ENCODE measurements at regions of chr12 and their contacts with region 1.

Region 1: GRCh38 chr12:21438643-21439042 is 1.2 kb downstream of the PYROXD1 start:
- DNase-seq: no peak
- H3K4me3 Mint-ChIP-seq: peak overlapping the region; percentile 90
- H3K27ac Mint-ChIP-seq: peak overlapping the region; percentile 95
- H3K4me1 Mint-ChIP-seq: peaks cover 38% of the 10 kb centered on the region
- H3K27me3 Mint-ChIP-seq: no peaks in the 10 kb centered on the region

Region 2: DNA sequence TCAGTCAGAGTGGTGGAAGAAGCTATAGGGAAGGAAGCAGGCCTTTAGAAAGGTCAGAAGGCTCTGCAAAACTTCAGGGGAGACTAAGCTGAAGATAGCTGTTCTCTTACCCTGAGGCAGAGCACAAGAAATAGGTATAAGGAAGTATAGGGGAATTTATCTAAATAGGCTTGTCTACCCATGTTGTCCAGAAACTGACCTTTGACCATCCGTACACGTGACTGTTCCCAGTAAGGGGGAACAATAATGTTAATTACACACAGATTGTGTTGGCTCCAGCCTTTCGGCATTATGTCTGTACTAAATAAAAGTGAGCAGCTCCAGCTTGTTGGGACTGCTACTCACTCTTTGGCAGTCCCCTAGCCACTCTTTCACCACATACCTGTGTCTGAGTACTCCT is 248.6 kb before region 1 on chr12:
- CTCF ChIA-PET with region 1: no interaction called
- intact Hi-C with region 1: no loop called
- DNase-seq: no peak
- H3K4me3 Mint-ChIP-seq: no peak overlapping the region
- H3K27ac Mint-ChIP-seq: no peak overlapping the region
- H3K4me1 Mint-ChIP-seq: no peaks in the 10 kb centered on the region
- H3K27me3 Mint-ChIP-seq: no peaks in the 10 kb centered on the region

Region 3: GRCh38 chr12:21248679-21249078 is 190.0 kb before region 1 on chr12:
- CTCF ChIA-PET with region 1: no interaction called
- intact Hi-C with region 1: loop called (anchors 5 kb)
- DNase-seq: no peak
- H3K4me3 Mint-ChIP-seq: no peak overlapping the region
- H3K27ac Mint-ChIP-seq: no peak overlapping the region
- H3K4me1 Mint-ChIP-seq: no peaks in the 10 kb centered on the region
- H3K27me3 Mint-ChIP-seq: no peaks in the 10 kb centered on the region

Region 4: GRCh38 chr12:21308785-21309184 is 129.9 kb before region 1 on chr12:
- CTCF ChIA-PET with region 1: no interaction called
- intact Hi-C with region 1: no loop called
- DNase-seq: no peak
- H3K4me3 Mint-ChIP-seq: no peak overlapping the region
- H3K27ac Mint-ChIP-seq: no peak overlapping the region
- H3K4me1 Mint-ChIP-seq: no peaks in the 10 kb centered on the region
- H3K27me3 Mint-ChIP-seq: peaks cover 2% of the 10 kb centered on the region

Region 5: DNA sequence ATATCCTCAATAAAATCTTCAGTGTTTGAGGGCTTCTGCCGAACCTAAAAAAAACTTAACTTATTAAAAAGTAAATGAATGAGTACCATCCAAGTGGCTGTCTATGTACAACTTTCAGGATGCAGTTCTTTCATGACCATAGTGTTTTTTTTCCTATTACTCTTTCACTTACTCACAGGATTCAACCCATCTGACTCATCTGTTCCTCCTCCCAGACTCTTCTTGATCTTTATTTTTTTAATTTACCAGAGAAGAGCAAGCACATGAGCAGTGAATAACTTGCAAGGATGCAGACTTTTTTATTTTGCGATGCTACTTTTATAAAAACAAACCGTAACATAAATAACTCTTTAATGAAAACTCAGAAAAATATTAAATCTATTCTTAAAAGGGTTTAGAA is 38.3 kb after region 1 on chr12:
- CTCF ChIA-PET with region 1: interaction called, 5 read pairs
- intact Hi-C with region 1: loop called (anchors 2 kb)
- DNase-seq: no peak
- H3K4me3 Mint-ChIP-seq: no peak overlapping the region
- H3K27ac Mint-ChIP-seq: peak overlapping the region; percentile 50
- H3K4me1 Mint-ChIP-seq: peaks cover 16% of the 10 kb centered on the region
- H3K27me3 Mint-ChIP-seq: no peaks in the 10 kb centered on the region

Region 6: GRCh38 chr12:21613931-21614330 is 175.3 kb after region 1 on chr12:
- CTCF ChIA-PET with region 1: no interaction called
- intact Hi-C with region 1: loop called (anchors 2 kb)
- DNase-seq: no peak
- H3K4me3 Mint-ChIP-seq: no peak overlapping the region
- H3K27ac Mint-ChIP-seq: peak overlapping the region; percentile 85
- H3K4me1 Mint-ChIP-seq: peaks cover 49% of the 10 kb centered on the region
- H3K27me3 Mint-ChIP-seq: no peaks in the 10 kb centered on the region

Region 7: GRCh38 chr12:21657326-21658077 is 218.9 kb after region 1 on chr12 and contains the start of gene LDHB:
- CTCF ChIA-PET with region 1: interaction called, 3 read pairs
- intact Hi-C with region 1: loop called (anchors 1 kb)
- DNase-seq: peak; percentile 98
- H3K4me3 Mint-ChIP-seq: peak within 1 kb of the TSS; percentile 98
- H3K27ac Mint-ChIP-seq: peak within 1 kb of the TSS; percentile 98
- H3K4me1 Mint-ChIP-seq: peaks cover 59% of the 10 kb centered on the region
- H3K27me3 Mint-ChIP-seq: no peaks in the 10 kb centered on the region
- total RNA-seq, gene LDHB: 2,296 to 2,461 TPM

Region 8: DNA sequence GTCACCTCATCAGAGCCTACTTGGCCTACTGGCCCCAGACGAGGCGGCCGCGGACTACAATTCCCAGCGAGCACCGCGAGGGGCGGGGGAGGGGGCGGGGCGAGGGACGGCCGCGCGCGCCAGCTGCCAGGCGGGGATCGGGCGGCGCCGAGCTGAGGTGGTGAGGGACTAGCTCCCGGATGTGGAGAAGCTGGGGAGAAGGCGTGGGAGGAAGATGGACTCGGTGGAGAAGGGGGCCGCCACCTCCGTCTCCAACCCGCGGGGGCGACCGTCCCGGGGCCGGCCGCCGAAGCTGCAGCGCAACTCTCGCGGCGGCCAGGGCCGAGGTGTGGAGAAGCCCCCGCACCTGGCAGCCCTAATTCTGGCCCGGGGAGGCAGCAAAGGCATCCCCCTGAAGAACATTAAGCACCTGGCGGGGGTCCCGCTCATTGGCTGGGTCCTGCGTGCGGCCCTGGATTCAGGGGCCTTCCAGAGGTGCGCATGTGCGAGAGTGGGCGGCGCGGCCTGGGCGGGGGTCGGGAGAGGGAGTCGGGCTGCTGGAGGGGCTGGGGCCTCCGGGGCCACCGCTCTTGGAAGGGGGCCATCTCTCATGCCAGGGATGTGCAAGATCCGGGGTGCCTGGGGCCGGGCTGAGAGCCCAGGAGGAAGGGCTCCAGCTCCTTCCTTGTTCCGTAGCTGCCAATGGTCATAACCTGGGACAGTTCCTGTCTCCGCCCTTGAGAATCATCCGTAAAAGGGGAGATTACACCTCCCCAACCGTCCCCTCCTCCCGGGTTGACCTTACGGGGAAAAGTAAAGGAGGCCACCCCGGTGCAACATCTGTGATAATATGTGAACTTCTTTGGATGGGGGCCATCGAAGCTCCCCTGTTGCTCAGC is 607.7 kb after region 1 on chr12 and contains the start of gene CMAS:
- CTCF ChIA-PET with region 1: no interaction called
- intact Hi-C with region 1: loop called (anchors 2 kb)
- DNase-seq: peak; percentile 84
- H3K4me3 Mint-ChIP-seq: peak within 1 kb of the TSS; percentile 95
- H3K27ac Mint-ChIP-seq: peak within 1 kb of the TSS; percentile 84
- H3K4me1 Mint-ChIP-seq: peaks cover 39% of the 10 kb centered on the region
- H3K27me3 Mint-ChIP-seq: no peaks in the 10 kb centered on the region
- total RNA-seq, gene CMAS: 47.3 to 48.5 TPM

Measured in activated naive CD4-positive, alpha-beta T cell treated with anti-CD3 and anti-CD28 coated beads for 36 hours (primary cell).